AG04450 (cell line): ENCODE measurements at regions of chr12 and their contacts with region 1.

Region 1: DNA sequence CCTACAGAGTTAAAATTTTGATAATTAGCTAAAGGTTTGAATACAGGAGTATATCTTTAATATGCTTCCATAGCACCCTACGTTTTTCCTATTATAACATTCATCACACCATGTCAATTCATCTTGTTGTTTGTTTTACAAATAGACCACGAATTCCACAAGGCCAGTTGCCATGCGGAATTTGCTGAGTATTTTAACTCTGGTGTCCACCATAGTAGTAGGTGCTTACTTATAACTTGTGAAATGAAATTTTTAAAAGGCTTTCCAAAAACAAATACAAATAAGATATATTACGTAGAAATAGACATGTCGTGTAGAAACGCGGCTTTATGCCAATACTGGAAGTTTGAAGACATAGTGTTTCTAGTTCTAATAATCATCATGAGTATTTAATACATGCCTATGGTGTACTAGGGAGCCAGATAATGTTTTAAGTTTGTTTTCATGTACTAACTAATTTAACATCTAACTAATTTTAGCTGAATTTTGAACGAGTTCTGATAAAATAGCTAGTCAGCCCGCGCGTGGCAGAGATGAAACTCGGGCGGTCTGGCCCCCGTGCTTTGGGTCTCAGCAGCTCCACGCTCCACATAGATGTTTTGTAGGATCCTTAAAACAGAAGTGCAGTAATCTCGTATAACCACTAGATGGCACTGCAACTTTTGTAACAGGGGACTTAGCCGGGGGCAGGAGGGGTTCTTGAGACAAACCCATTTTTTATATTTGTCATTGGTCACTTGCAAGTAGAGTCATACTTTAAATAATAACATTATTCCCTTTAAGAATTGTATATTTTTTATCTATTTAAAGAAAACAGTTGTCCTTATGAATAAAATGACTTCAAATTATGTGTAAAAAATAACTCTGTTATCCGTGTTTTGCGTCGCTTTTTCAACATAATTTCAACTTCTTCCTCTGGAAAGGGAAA is 10.2 kb downstream of the CD69 start:
- DNase-seq: peak; percentile 13
- H3K4me3 ChIP-seq: no peak overlapping the region
- H3K27ac ChIP-seq: no peak overlapping the region
- H3K27me3 ChIP-seq: no peaks in the 10 kb centered on the region
- CTCF ChIP-seq: peak; percentile 83

Region 2: DNA sequence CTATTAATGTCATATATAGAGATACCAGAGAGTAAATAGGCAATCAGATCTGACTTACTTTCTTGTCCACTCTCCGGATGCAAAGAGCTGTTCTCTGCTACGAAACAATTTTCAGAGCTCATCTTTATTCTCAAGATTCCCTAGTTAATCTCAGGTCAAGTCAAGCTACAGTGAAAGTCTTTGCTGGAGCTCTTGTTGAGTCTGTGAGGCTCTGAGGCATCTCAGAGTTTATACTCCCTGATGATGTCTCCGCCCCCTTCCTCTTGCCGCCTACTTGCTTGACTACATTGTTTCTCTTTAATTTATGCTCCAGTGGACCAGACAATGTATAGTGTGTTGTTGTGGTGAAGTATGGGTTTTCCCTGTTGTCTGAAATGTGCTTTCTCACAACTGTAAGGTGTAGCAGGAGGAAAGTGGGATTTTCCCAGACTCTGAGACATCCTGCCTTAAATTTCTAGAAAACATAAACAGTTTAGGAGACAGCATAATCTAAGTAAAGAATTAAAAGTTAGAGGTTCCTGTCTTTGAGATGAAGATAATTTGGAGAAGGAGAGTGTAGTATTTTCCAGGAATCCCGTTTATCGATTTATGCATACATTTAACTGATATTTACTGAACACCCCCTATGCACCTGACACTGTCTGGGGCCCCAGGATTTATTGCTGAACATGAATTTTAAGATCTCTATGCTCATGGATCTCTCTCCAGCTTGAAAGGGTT is 10.3 kb after region 1 on chr12 and contains the start of gene CD69:
- CTCF ChIA-PET with region 1: interaction called, 60 read pairs
- POLR2A ChIA-PET with region 1: no interaction called
- DNase-seq: no peak
- H3K4me3 ChIP-seq: no peak within 1 kb of the TSS
- H3K27ac ChIP-seq: no peak within 1 kb of the TSS
- H3K27me3 ChIP-seq: no peaks in the 10 kb centered on the region
- CTCF ChIP-seq: no peak
- polyA plus RNA-seq, gene CD69: not detected in 2 replicates

Region 3: GRCh38 chr12:9813821-9814809 is 63.6 kb after region 1 on chr12:
- CTCF ChIA-PET with region 1: interaction called, 24 read pairs
- POLR2A ChIA-PET with region 1: no interaction called
- DNase-seq: no peak
- H3K4me3 ChIP-seq: no peak overlapping the region
- H3K27ac ChIP-seq: no peak overlapping the region
- H3K27me3 ChIP-seq: no peaks in the 10 kb centered on the region
- CTCF ChIP-seq: peak; percentile 79

Region 4: GRCh38 chr12:9897535-9897934 is 147.0 kb after region 1 on chr12:
- CTCF ChIA-PET with region 1: interaction called, 12 read pairs
- POLR2A ChIA-PET with region 1: no interaction called
- DNase-seq: no peak
- H3K4me3 ChIP-seq: no peak overlapping the region
- H3K27ac ChIP-seq: no peak overlapping the region
- H3K27me3 ChIP-seq: no peaks in the 10 kb centered on the region
- CTCF ChIP-seq: no peak

Region 5: GRCh38 chr12:9940375-9940774 is 189.8 kb after region 1 on chr12:
- CTCF ChIA-PET with region 1: interaction called, 31 read pairs
- POLR2A ChIA-PET with region 1: no interaction called
- DNase-seq: no peak
- H3K4me3 ChIP-seq: no peak overlapping the region
- H3K27ac ChIP-seq: no peak overlapping the region
- H3K27me3 ChIP-seq: peaks cover 5% of the 10 kb centered on the region
- CTCF ChIP-seq: peak; percentile 50

Region 6: GRCh38 chr12:10140001-10140400 is 389.5 kb after region 1 on chr12:
- CTCF ChIA-PET with region 1: interaction called, 58 read pairs
- POLR2A ChIA-PET with region 1: no interaction called
- DNase-seq: no peak
- H3K4me3 ChIP-seq: no peak overlapping the region
- H3K27ac ChIP-seq: no peak overlapping the region
- H3K27me3 ChIP-seq: no peaks in the 10 kb centered on the region
- CTCF ChIP-seq: peak; percentile 51